AG04449 (cell line): ENCODE measurements at regions of chr11 and their contacts with region 1.

Region 1: GRCh38 chr11:58905721-58906477 is 33.4 kb upstream of the GLYATL1 start:
- DNase-seq: peak; percentile 41
- H3K4me3 ChIP-seq: peak overlapping the region; percentile 75
- CTCF ChIP-seq: peak; percentile 54

Region 2: GRCh38 chr11:58927393-58928106 is 21.7 kb after region 1 on chr11:
- CTCF ChIA-PET with region 1: interaction called, 25 read pairs
- POLR2A ChIA-PET with region 1: interaction called, 4 read pairs
- DNase-seq: no peak
- H3K4me3 ChIP-seq: no peak overlapping the region
- CTCF ChIP-seq: no peak

Region 3: DNA sequence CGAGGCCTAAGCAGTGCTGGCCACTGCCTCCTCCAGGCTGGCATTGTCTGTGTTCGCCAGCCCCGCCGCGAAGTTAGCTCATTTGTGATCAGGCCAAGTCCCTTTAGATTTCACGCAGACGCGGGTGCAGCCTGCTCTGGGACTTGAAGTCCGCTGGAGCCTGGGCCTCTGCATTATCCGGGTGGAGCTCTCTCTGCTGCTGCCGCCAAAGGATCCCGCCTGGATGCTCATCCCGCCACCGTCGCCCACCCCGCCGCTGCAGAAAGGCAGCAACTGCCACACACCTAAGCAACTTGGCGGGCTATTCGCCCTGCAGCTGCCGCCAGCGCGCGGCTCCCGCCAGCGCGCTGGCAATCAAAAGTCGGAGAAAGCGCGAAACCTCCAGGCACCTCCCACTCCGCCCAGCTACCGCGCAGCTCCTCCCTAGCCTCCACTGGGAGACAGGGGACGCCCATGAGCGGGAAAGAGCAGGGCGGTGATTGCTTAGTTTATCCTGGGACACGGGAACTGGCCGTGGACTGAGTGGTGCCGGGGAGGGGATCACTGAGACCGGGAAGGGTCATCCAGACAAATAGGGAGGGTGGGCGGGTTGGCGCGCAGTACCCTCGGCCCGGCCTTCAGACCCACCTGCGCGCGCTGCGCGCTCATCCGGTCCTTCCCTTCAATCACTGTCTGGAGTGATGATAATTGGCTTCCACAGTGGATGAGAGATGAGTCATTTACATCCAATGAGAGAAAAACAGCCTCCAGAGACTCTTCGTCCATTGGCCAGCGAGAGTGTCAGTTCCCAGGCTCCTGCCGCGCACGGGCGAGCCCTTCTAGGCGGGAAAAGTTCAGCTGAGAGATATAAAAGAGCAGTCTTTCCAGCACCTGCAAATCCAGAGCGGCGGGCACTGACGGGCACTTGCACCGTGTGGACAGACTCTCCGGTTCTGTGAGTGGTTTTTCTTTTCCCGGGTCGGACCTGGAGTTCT is 200.8 kb after region 1 on chr11 and contains the start of gene FAM111B:
- CTCF ChIA-PET with region 1: no interaction called
- POLR2A ChIA-PET with region 1: no interaction called
- DNase-seq: peak; percentile 47
- H3K4me3 ChIP-seq: peak within 1 kb of the TSS; percentile 68
- CTCF ChIP-seq: peak; percentile 23